ENCODE measurements at regions of chr5 and their contacts with region 1.

Region 1: GRCh38 chr5:81506900-81507588 is 113.1 kb upstream of the ACOT12 start:
- DNase-seq: no peak
- H3K4me3 ChIP-seq: no peak overlapping the region
- H3K27ac ChIP-seq: no peak overlapping the region
- H3K4me1 ChIP-seq: no peaks in the 10 kb centered on the region
- H3K27me3 ChIP-seq: no peaks in the 10 kb centered on the region
- CTCF ChIP-seq: peak; percentile 72 to 80 (median 80)

Region 2: DNA sequence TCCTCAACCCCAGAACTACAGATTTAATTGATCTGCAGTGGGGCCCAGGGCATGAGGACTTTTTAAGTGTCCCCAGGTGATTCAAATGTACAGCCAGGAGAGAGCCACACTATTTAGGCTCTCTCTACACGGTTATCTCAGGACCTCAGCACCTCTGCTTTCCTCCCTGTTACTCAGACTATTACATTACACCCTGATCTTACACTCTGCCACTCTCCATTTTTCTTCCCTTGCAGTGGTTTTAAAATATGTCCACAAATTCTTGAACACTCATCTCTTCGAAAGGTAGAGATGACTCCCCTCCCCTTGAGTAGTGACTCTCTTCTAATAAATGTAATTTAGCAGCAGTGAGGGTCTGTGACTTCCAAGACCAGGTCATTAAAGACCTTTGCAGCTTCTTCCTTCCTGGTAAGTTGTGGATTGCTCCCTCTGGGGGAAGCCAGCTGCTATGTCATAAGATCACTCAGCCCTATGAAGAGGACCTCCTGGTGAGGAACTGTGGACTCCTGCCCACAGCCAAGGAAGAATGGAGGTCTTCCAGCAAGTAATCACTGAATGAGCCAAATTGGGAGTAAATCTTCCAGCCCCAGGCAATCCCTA is 331.4 kb after region 1 on chr5:
- dilution Hi-C with region 1: loop called (anchors 25 kb)
- DNase-seq: no peak
- H3K4me3 ChIP-seq: no peak overlapping the region
- H3K27ac ChIP-seq: no peak overlapping the region
- H3K4me1 ChIP-seq: peaks cover 9% of the 10 kb centered on the region
- H3K27me3 ChIP-seq: no peaks in the 10 kb centered on the region
- CTCF ChIP-seq: peak; percentile 50 to 61 (median 59)

Region 3: DNA sequence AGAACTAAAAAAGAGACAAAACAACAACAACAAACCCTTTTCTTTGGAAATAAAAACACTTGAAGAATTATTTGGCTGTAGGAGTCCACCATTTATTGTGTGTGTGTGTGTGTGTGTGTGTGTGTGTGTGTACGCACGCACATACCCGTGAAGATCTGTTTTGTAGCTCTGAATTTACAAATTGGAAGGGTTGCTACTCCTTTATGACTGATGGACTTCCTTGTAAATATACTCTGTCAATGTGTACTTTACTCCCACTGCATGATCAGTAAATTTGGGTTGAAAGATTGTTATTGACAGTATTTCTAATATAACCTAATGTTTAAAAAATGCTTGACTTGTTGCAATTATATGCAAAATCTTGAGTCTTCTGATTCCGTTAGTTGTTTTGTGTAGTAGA is 612.8 kb after region 1 on chr5:
- dilution Hi-C with region 1: no loop called
- DNase-seq: no peak
- H3K4me3 ChIP-seq: no peak overlapping the region
- H3K27ac ChIP-seq: no peak overlapping the region
- H3K4me1 ChIP-seq: no peaks in the 10 kb centered on the region
- H3K27me3 ChIP-seq: no peaks in the 10 kb centered on the region
- CTCF ChIP-seq: no peak